ENCODE measurements at regions of chr2 and their contacts with region 1.

Region 1: DNA sequence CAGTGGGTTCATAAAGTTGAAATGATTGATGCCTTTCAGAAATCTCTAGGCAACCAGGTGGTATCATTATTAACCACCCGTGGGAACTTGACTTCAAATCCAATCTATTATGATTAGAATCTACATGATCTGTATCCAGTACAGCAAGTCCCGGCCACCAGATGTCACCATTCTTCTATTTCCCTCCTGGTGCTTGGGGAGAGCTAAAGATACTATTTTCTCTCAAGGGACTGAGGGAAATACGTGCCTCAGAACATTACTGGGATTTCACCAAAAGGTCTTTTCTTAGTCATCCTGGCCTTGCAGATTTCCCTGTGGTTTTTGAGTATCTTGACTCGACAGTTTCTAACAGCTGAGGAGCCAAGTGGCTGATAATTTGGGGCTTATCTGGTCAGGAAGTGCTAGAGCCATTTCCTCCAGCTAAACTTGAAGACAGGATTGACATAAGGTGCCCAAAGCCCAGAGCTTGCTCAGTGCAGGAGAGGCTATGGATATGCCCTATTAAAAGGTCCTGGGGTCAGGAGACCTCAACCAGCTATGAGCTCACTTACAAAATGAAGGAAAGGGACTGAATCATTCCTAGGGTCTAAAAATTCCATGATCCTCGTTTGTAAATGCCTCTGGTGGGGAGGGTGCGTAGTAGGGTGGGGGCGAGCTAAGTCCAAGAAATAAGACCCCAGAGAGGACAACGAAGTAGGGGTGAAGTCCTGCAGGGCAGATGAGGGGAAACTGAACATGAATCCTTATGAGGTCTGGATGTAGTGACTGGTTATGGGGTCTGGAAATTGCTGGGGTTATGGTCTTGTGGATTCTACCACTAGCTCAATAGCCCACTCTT is 135.4 kb upstream of the MGAT5 start:
- DNase-seq: peak; percentile 62
- H3K4me3 Mint-ChIP-seq: peak overlapping the region; percentile 47
- H3K27ac Mint-ChIP-seq: no peak overlapping the region
- H3K4me1 Mint-ChIP-seq: peaks cover 19% of the 10 kb centered on the region
- H3K27me3 Mint-ChIP-seq: peaks cover 42% of the 10 kb centered on the region

Region 2: GRCh38 chr2:134014196-134014960 is 104.1 kb before region 1 on chr2:
- intact Hi-C with region 1: no loop called
- DNase-seq: no peak
- H3K4me3 Mint-ChIP-seq: no peak overlapping the region
- H3K27ac Mint-ChIP-seq: no peak overlapping the region
- H3K4me1 Mint-ChIP-seq: no peaks in the 10 kb centered on the region
- H3K27me3 Mint-ChIP-seq: no peaks in the 10 kb centered on the region

Region 3: DNA sequence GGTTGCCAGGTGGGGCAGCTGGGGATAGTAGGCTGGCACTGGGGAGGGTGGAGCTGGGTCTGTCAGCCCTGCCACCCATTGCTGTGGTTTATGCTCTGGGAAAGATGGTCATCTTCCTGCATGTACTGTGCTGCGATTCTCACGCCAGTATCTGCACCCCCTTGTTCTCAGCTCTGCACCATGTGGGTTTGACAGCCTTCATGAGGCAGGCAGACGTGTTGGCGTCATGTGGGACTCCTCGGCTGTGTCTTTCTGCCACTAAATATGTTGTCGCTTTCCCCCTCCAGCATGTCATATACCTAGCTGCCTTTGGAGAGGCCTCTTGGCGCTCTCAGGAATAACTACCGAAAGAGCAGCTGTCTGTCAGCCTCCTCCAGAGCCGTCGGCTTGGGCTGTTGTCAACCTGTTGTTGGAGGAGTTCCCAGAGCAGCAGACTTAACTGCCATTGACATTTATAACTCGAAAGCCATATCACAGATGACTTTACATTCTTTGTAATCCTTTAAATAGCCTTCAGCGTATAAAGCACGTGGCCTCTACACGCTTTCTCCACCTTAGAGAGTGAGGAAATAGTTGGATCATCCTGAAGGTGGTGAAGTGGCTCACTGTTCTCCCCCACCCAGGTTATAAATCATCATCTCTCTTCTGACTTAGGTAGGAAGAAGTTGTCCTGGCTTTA is 55.0 kb after region 1 on chr2:
- intact Hi-C with region 1: loop called (anchors 5 kb)
- DNase-seq: no peak
- H3K4me3 Mint-ChIP-seq: no peak overlapping the region
- H3K27ac Mint-ChIP-seq: no peak overlapping the region
- H3K4me1 Mint-ChIP-seq: peaks cover 4% of the 10 kb centered on the region
- H3K27me3 Mint-ChIP-seq: peaks cover 3% of the 10 kb centered on the region

Region 4: GRCh38 chr2:134245340-134245984 is 127.0 kb after region 1 on chr2:
- intact Hi-C with region 1: loop called (anchors 1 kb)
- DNase-seq: peak; percentile 41
- H3K4me3 Mint-ChIP-seq: no peak overlapping the region
- H3K27ac Mint-ChIP-seq: no peak overlapping the region
- H3K4me1 Mint-ChIP-seq: peaks cover 31% of the 10 kb centered on the region
- H3K27me3 Mint-ChIP-seq: peaks cover 68% of the 10 kb centered on the region

Region 5: DNA sequence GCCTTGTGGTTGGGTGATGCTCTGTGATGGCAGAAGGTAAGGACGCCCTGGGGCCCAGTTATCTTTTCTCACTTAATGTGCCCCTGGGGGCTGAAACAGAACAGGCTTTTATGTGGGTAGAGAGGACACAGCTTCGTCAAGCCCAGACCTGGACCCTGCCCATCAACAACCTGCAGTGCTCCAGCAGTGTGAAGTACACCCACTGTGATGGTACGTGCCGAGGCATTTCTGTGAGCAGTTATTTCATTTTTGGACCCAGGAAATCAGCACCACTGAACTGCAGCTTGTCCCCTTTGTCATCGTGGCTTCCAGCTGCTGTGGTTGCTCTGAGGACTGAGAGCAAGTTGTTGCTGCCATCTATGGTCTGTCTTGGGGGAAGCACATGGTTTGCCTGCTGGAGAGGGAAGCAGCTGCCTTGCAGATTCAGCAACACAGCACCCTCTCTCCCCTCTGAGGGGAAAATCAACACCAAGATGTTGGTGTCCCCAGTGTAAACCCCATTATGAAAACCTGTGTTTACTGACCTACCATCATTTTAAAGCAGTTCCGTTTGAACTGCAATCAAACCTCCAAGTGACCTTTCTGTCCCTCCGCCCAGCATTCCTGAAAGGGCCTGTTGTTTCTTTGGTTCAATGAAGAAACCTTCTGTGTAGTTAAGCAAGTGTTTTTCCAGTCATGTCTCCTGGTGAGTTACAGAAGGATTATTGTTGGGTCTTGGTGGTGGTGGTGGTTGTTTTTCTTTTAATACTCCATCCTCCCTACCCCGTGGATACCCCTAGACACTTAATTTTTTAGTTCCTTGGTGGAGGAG is 293.5 kb after region 1 on chr2:
- intact Hi-C with region 1: loop called (anchors 1 kb)
- DNase-seq: peak; percentile 44
- H3K4me3 Mint-ChIP-seq: no peak overlapping the region
- H3K27ac Mint-ChIP-seq: no peak overlapping the region
- H3K4me1 Mint-ChIP-seq: peaks cover 5% of the 10 kb centered on the region
- H3K27me3 Mint-ChIP-seq: peaks cover 4% of the 10 kb centered on the region

Region 6: DNA sequence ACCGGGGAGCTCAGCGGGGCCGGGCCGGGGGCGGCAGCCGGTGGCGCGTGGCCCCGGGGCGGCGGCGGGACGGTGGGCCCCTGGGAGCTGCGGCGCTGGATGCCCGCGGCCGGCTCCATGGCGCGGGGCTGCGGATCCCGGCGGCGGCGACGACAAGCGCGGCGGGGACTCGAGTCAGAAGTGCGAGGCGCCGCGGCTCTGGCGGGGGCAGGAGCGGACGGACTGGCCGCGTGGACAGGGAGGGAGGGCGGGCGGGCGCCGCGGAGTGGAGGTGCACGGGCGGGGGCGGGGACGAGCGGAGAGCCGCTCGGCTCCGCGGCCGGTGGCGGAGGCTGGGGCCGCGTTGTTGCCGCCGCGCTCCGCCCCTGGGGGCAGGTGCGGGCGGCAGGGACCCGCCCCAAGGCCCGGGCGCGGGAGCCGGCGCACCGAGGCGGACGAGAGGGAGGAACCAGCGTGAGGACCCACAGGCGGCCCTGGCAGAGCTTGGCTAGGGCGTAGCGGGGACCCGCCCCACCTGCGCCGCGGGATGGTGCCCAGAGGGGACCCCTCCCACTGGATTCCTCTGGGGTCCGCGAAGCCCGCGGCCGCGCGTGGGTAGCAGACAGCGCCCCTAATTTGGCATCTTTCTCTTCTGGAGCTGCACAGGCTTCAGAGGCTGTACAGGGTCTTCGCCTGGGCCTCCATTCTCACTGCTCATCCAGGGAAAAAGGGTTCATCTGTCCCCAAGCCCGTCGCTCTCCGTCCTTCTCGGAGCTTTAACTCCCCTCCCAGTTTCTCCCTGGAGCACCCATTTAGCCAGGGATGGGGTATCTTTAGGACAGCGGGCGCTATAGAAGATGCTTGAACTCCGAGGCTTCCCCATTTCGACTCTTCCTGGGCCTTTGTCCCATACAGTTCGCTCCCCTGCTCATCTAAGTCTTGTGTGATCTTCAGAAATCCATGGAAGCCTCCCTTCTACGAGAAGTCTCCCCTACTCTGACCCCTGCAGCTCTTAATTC is 600.6 kb after region 1 on chr2 and contains the start of gene TMEM163:
- intact Hi-C with region 1: loop called (anchors 5 kb)
- DNase-seq: no peak
- H3K4me3 Mint-ChIP-seq: peak within 1 kb of the TSS; percentile 43
- H3K27ac Mint-ChIP-seq: no peak within 1 kb of the TSS
- H3K4me1 Mint-ChIP-seq: peaks cover 10% of the 10 kb centered on the region
- H3K27me3 Mint-ChIP-seq: peaks cover 65% of the 10 kb centered on the region
- total RNA-seq, gene TMEM163: 0.09 and 0.27 TPM in 2 replicates

Region 7: DNA sequence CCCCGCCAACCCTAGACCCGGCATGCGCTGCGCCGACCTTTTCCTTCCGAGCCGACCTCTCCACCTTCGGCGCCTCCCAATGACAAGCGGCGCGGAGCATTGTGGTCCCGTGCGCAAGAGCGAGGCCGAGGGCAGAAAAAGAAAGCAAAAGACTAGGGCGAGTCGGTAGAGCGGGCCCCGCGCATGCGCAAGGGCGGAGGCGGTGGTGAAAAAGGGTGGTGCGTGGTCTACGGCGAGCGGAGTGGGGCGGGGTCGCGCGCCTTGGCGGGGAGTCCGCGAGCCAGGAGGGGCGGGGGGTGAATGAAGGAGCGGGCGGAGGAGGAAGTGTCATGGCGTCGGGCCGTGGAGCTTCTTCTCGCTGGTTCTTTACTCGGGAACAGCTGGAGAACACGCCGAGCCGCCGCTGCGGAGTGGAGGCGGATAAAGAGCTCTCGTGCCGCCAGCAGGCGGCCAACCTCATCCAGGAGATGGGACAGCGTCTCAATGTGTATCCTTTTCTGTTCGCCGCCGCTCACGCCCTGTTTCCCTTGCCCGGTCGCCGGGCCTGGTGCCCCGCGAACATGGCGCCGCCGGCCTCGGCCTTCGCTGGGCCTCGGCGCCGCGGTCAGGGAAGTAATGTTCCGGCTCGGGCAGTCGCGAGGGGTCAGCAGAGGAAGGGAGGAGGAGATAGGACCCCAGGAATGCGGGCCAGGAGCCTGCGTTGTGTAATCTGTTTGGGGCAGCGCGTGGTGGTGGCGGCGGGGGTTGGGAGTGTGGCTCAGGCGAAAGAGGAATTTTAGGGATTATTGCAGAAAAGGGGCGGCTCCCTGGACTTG is 800.2 kb after region 1 on chr2 and contains the start of gene CCNT2:
- intact Hi-C with region 1: loop called (anchors 2 kb)
- DNase-seq: peak; percentile 100
- H3K4me3 Mint-ChIP-seq: peak within 1 kb of the TSS; percentile 99
- H3K27ac Mint-ChIP-seq: peak within 1 kb of the TSS; percentile 98
- H3K4me1 Mint-ChIP-seq: peaks cover 20% of the 10 kb centered on the region
- H3K27me3 Mint-ChIP-seq: peaks cover 3% of the 10 kb centered on the region
- total RNA-seq, gene CCNT2: 39.2 and 41.0 TPM in 2 replicates

Measured in activated T-helper 2 cell treated with anti-CD3 and anti-CD28 coated beads, Interferon-gamma antibody, Interleukin-2, Interleukin-4, amounts not matched to agents 10 μg/mL and 5 μg/mL and 100 μg/mL, durations not matched to agents 14 hours and 24 hours and 36 hours (primary cell).